Activated naive CD4-positive, alpha-beta T cell treated with anti-CD3 and anti-CD28 coated beads for 36 hours (primary cell): ENCODE measurements at regions of chr3 and their contacts with region 1.

Region 1: DNA sequence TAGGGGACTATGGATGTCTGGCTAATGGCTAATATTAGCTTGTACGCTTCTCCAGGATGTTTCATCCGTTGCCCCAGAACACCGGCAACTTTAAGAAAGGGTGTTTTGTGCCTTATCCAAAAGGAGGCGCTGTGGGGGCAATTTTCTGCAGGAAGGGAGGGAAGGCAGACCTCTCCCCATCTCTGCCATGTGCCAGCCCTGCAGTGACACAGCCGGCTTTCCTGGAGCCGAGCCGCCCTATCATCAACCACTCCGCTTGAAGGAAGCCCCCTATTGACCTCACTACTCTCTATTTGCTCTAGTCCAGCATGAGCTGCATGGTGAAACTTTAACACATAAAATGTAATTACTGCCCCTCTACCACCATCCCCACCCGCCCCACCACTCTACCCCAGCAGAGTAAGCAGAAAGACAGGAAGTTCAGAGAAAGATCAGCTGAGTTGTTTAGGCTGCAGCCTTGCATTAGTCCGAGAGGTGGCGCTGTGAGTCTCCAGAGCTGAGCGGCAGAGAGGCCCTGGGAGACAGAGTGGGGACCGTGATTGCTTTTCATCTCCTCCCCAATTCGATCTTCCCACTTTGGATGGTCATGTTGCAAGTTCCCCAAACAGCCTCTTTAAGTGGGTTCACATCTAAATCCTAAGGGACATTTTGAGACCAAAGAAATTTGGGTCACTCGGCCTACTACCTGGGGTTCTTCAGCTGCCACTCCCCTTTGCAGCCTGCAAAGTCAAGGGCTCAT is 24.5 kb upstream of the RAD18 start:
- DNase-seq: peak; percentile 84
- H3K4me3 Mint-ChIP-seq: no peak overlapping the region
- H3K27ac Mint-ChIP-seq: no peak overlapping the region
- H3K4me1 Mint-ChIP-seq: peaks cover 3% of the 10 kb centered on the region
- H3K27me3 Mint-ChIP-seq: no peaks in the 10 kb centered on the region

Region 2: DNA sequence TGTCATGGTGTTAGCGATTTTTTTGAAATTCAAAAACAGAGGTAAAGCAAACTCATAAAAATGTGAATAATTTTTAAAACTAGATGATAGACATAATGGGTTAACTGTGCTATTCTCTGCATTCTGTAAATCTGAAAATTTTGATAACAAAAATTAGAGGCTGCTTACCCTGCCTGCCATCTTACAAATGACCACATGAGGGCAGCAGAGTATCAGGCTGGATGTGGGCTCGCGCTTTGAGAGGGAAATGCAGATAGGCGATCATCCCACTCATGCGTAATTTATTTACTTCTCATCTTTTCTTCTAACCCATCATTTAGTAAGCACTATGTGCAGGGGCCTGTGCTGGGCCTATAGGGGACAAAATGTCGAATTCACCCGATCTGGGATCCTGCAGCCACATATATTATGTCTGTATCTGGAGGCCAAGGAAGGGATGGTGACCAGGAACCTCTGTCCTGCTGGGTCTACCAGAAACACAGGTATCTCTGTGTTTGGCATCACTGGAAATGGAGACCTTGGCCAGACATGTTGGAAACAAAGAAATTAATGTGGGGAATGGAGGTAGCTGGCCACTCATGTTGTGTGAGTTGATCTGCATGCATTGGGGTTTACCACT is 16.7 kb before region 1 on chr3:
- CTCF ChIA-PET with region 1: interaction called, 24 read pairs
- intact Hi-C with region 1: no loop called
- DNase-seq: peak; percentile 85
- H3K4me3 Mint-ChIP-seq: no peak overlapping the region
- H3K27ac Mint-ChIP-seq: no peak overlapping the region
- H3K4me1 Mint-ChIP-seq: peaks cover 2% of the 10 kb centered on the region
- H3K27me3 Mint-ChIP-seq: no peaks in the 10 kb centered on the region

Region 3: GRCh38 chr3:9013782-9014563 is 26.2 kb after region 1 on chr3:
- CTCF ChIA-PET with region 1: interaction called, 16 read pairs
- intact Hi-C with region 1: no loop called
- DNase-seq: no peak
- H3K4me3 Mint-ChIP-seq: no peak overlapping the region
- H3K27ac Mint-ChIP-seq: no peak overlapping the region
- H3K4me1 Mint-ChIP-seq: peaks cover 14% of the 10 kb centered on the region
- H3K27me3 Mint-ChIP-seq: no peaks in the 10 kb centered on the region

Region 4: DNA sequence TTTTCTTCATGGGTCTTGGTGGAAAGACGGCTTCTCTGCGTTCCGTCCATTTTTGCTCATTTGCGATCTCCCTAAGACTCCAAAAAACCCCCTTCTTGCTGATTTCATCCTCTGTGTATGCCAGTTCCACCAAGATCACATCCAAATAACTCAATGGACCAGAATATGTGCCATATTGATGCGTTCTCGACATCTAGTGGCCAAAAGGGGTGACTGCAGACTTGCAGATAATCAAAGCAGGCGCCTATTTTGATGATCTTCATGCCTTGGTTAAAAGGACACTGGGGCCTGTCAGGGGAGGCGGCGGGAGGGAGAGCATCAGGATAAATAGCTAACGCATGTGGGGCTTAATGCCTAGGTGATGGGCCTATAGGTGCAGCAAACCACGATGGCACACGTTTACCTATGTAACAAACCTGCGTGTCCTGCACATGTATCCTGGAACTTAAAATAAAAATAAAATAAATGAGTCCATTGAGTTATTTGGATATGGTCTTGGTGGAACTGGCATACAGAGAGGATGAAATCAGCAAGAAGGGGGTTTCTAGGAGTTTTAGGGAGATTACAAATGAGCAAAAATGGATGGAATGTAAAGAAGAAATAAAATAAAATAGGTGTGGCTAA is 79.7 kb after region 1 on chr3:
- CTCF ChIA-PET with region 1: interaction called, 8 read pairs
- intact Hi-C with region 1: loop called (anchors 1 kb)
- DNase-seq: peak; percentile 57
- H3K4me3 Mint-ChIP-seq: no peak overlapping the region
- H3K27ac Mint-ChIP-seq: no peak overlapping the region
- H3K4me1 Mint-ChIP-seq: no peaks in the 10 kb centered on the region
- H3K27me3 Mint-ChIP-seq: no peaks in the 10 kb centered on the region

Region 5: GRCh38 chr3:9249273-9250192 is 261.7 kb after region 1 on chr3 and contains the start of gene SRGAP3:
- CTCF ChIA-PET with region 1: interaction called, 27 read pairs
- intact Hi-C with region 1: loop called (anchors 1 kb)
- DNase-seq: peak; percentile 86
- H3K4me3 Mint-ChIP-seq: peak within 1 kb of the TSS; percentile 77
- H3K27ac Mint-ChIP-seq: peak within 1 kb of the TSS; percentile 28
- H3K4me1 Mint-ChIP-seq: peaks cover 17% of the 10 kb centered on the region
- H3K27me3 Mint-ChIP-seq: no peaks in the 10 kb centered on the region
- total RNA-seq, gene SRGAP3: 2.4 to 2.5 TPM